ENCODE measurements at regions of chr1 and their contacts with region 1.

Region 1: DNA sequence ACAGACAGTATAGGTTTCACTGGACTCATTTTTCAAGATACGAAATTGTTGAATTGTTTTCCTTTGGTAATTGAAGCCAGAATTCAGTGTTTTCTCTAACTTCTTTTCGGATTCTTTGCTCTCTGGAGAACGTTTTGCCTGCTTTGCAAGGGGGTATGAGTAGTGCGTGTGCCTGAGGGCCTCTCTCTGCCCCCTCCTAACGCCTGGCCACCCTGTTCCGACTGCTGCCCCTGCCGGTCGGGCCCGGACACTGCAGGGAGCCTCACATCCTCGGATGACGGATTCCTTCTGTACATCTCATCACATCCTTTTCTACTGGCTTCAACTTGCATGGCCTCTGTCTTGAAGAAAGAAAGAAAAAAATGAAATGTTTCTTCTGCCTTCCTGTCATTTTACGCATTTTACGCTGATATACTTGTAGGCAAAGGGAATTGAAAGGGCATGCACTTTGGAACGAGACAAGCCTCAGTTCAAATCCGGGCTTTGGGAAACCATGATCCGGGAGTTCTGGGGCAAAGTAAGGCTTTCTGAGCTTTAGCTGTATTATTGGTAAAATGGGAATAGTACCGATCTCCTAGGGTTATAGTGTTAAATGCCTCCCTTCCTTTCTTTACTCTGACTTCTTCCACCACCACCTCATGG is 65.1 kb downstream of the DISC1 start:
- ATAC-seq: peak in 2 of 8 experiments; percentile 11 to 35
- H3K4me3 ChIP-seq: no peak overlapping the region
- H3K27ac ChIP-seq: no peak overlapping the region
- H3K4me1 ChIP-seq: peaks cover 17 to 30% of the 10 kb centered on the region in 2 donors

Region 2: GRCh38 chr1:231584124-231584523 is 107.6 kb before region 1 on chr1:
- in situ Hi-C with region 1: no loop called
- ATAC-seq: peak in 3 of 8 experiments; percentile 59 to 90 (median 66)
- H3K4me3 ChIP-seq: no peak overlapping the region
- H3K27ac ChIP-seq: no peak overlapping the region
- H3K4me1 ChIP-seq: peaks cover 5 to 11% of the 10 kb centered on the region in 2 donors

Region 3: DNA sequence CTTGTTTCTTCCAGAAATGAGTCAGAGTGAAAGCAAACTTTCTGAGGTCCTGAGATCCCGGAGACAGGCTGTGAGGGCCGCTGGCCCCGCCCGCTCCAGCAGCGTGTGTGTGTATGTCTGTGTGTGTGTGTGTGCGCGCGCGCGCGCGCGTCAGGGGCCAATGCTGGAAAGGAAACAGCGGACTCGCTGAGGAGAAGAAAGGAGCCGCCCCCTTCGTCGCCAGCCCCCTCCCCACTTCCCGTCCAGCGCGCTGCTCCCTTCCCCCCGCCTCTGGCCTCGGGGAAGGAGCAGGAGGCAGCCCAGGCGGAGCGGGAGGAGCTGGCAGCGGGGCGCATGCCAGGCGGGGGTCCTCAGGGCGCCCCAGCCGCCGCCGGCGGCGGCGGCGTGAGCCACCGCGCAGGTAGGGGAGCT is 65.2 kb before region 1 on chr1 and contains the start of gene DISC1:
- in situ Hi-C with region 1: loop called in 1 of 9 experiments (anchors 10 kb)
- ATAC-seq: peak; percentile 73 to 97 (median 95)
- H3K4me3 ChIP-seq: peak within 1 kb of the TSS; percentile 44 to 61 (median 52)
- H3K27ac ChIP-seq: no peak within 1 kb of the TSS
- H3K4me1 ChIP-seq: no peaks in the 10 kb centered on the region
- total RNA-seq, gene DISC1: 1.2 to 13.5 (median 3.7) TPM

Measured in motor neuron (in vitro differentiated cells).